Aorta (tissue), 5 donors: ENCODE measurements at regions of chr2 and their contacts with region 1.

Region 1: DNA sequence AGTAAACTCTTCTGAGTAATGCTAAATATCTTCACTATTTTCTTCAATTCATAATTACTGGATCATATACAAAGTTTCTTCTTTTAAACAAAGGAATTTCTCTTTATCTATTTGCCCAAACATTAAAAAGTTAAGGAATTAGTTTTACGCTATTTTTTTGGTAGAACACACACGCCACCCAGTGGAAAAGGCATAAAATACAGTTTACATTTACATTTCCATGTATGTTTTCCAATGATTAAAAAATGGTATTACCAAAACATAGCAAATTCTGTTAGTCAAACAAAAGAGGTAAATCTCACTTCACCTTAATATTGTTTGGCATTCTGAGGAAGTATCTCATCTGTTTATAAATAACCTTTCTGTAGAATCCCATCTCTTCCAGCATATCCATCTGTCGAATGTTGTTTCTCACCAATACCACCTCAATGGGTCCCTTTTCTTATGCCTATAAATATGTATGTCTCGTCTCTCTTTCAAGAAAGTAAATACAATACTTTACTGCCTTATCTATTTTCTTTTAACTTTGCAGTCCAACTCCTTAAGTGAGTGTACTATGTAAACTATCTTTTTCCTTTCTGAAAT is 7.2 kb downstream of the BOLL start:
- DNase-seq: no peak
- ATAC-seq: no peak
- H3K4me3 ChIP-seq: no peak overlapping the region
- H3K27ac ChIP-seq: no peak overlapping the region
- H3K4me1 ChIP-seq: no peaks in the 10 kb centered on the region
- H3K27me3 ChIP-seq: no peaks in the 10 kb centered on the region

Region 2: DNA sequence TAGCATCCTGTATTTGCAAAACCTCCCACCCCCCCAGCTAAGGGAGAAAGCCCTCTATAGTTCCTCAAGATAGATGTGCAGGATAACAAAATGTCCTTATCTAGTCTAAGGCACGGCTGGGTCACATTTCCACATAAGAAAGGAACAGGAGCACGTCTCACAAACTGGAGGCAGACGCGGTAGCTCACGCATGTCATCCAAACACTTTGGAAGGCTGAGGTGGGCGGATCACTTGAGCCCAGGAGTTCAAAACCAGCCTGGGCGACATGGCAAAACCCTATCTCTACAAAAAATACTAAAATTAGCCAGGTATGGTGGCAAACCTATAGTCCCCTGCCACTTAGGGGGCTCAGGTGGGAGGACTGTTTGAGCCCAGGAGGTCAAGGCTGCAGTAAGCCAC is 352.4 kb before region 1 on chr2:
- intact Hi-C with region 1: loop called in 1 of 2 experiments (anchors 10 kb)
- DNase-seq: no peak
- ATAC-seq: no peak
- H3K4me3 ChIP-seq: no peak overlapping the region
- H3K27ac ChIP-seq: no peak overlapping the region
- H3K4me1 ChIP-seq: peaks cover 0 to 1% of the 10 kb centered on the region in 2 donors
- H3K27me3 ChIP-seq: no peaks in the 10 kb centered on the region

Region 3: DNA sequence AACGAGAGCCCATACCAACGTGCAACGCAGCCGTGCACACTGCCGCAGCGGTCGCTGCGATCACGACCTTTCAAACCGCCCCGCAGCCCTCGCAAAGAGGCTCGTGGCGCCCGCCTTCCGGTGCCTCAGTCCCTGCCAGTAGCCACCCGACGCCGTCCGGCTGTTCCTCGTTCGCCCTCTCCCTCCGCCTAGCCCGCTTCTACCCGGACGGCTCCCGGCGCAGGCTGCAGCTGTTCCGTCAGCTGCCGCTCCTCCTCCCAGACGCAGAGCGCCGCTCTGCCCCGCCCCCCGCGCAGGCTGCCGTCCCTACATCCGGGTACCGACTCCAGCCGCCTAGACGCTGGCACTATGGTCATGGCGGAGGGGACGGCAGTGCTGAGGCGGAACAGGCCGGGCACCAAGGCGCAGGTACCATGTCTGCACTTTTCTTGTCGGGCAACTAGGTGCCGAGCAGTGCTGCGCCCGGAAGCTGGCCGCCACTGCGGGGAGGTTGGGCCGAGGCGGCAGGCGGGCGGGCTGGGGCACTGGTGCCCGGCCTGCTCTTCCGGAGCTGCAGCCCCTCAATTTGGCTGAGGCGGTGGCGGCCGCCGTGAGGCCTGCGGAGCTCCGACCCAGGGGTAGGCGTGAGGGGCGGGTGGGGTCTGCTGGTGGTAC is 262.0 kb before region 1 on chr2 and contains the start of gene MOB4:
- intact Hi-C with region 1: loop called in 1 of 2 experiments (anchors 10 kb)
- DNase-seq: peak; percentile 97 to 99
- ATAC-seq: peak; percentile 100
- H3K4me3 ChIP-seq: peak within 1 kb of the TSS; percentile 67 to 75
- H3K27ac ChIP-seq: peak within 1 kb of the TSS; percentile 84 to 94
- H3K4me1 ChIP-seq: no peaks in the 10 kb centered on the region
- H3K27me3 ChIP-seq: no peaks in the 10 kb centered on the region
- total RNA-seq, gene MOB4: 24.9 to 36.1 TPM

Region 4: DNA sequence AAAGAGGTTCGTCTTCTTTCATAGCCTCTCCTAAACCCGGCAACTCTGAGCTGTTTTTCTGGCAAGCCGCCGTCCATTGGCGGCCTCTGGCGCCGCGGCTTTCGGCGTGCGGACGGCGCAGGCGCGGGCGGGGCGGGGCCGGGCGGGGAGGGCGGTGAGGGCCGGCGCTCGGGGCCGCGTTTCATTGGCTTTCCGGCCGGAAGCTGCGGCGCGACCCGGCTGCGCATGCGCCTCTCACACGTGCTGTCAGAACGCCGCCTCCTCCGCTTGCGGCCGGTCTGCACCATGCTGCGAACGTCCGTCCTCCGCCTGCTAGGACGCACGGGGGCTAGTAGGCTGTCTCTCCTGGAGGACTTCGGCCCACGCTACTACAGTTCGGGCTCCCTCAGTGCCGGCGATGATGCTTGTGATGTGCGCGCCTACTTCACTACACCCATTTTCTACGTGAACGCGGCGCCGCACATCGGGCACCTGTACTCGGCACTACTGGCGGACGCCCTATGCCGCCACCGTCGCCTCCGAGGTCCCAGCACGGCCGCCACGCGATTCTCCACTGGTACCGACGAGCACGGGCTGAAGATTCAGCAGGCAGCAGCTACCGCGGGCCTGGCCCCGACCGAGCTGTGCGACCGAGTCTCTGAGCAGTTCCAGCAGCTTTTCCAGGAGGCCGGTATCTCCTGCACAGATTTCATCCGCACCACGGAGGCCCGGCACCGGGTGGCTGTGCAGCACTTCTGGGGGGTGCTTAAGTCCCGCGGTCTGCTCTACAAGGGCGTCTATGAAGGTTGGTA is 72.6 kb before region 1 on chr2 and contains the start of gene MARS2:
- intact Hi-C with region 1: loop called in 1 of 2 experiments (anchors 2 kb)
- DNase-seq: peak; percentile 96 to 98
- ATAC-seq: peak; percentile 98
- H3K4me3 ChIP-seq: peak within 1 kb of the TSS; percentile 72 to 80
- H3K27ac ChIP-seq: peak within 1 kb of the TSS; percentile 21 to 55
- H3K4me1 ChIP-seq: peaks cover 0 to 5% of the 10 kb centered on the region in 2 donors
- H3K27me3 ChIP-seq: no peaks in the 10 kb centered on the region
- total RNA-seq, gene MARS2: 3.6 to 3.7 TPM

Region 5: GRCh38 chr2:198016243-198016642 is 238.3 kb after region 1 on chr2:
- intact Hi-C with region 1: no loop called
- DNase-seq: no peak
- ATAC-seq: no peak
- H3K4me3 ChIP-seq: no peak overlapping the region
- H3K27ac ChIP-seq: no peak overlapping the region
- H3K4me1 ChIP-seq: peaks cover 0 to 6% of the 10 kb centered on the region in 2 donors
- H3K27me3 ChIP-seq: no peaks in the 10 kb centered on the region